GM10248 (cell line): ENCODE measurements at regions of chr6 and their contacts with region 1.

Region 1: GRCh38 chr6:105402939-105403935 is at the start of gene PREP:
- DNase-seq: peak; percentile 93
- CTCF ChIP-seq: peak; percentile 71

Region 2: GRCh38 chr6:105374010-105374420 is 29.2 kb before region 1 on chr6:
- CTCF ChIA-PET with region 1: interaction called, 22 read pairs
- POLR2A ChIA-PET with region 1: no interaction called
- DNase-seq: no peak
- CTCF ChIP-seq: no peak

Region 3: GRCh38 chr6:105384008-105384407 is 19.2 kb before region 1 on chr6:
- CTCF ChIA-PET with region 1: interaction called, 18 read pairs
- POLR2A ChIA-PET with region 1: interaction called, 3 read pairs
- DNase-seq: no peak
- CTCF ChIP-seq: no peak